ENCODE measurements at regions of chr2 and their contacts with region 1.

Region 1: GRCh38 chr2:176126929-176127773 is 2.4 kb upstream of the HOXD8 start:
- DNase-seq: peak; percentile 78
- ATAC-seq: 0 out of 2 replicates have a peak, but pooled peaks have one; percentile 14
- H3K4me3 ChIP-seq: peak overlapping the region; percentile 62
- H3K27ac ChIP-seq: no peak overlapping the region
- H3K4me1 ChIP-seq: peaks cover 10% of the 10 kb centered on the region
- H3K27me3 ChIP-seq: no peaks in the 10 kb centered on the region
- CTCF ChIP-seq: peak; percentile 93

Region 2: GRCh38 chr2:176187899-176188773 is 61.0 kb after region 1 on chr2 and contains the start of gene HOXD1:
- CTCF ChIA-PET with region 1: no interaction called
- POLR2A ChIA-PET with region 1: no interaction called
- intact Hi-C with region 1: no loop called
- DNase-seq: peak; percentile 15
- ATAC-seq: peak; percentile 71
- H3K4me3 ChIP-seq: peak within 1 kb of the TSS; percentile 60
- H3K27ac ChIP-seq: no peak within 1 kb of the TSS
- H3K4me1 ChIP-seq: no peaks in the 10 kb centered on the region
- H3K27me3 ChIP-seq: peaks cover 25% of the 10 kb centered on the region
- CTCF ChIP-seq: no peak
- total RNA-seq, gene HOXD1: not detected in 2 replicates

Region 3: DNA sequence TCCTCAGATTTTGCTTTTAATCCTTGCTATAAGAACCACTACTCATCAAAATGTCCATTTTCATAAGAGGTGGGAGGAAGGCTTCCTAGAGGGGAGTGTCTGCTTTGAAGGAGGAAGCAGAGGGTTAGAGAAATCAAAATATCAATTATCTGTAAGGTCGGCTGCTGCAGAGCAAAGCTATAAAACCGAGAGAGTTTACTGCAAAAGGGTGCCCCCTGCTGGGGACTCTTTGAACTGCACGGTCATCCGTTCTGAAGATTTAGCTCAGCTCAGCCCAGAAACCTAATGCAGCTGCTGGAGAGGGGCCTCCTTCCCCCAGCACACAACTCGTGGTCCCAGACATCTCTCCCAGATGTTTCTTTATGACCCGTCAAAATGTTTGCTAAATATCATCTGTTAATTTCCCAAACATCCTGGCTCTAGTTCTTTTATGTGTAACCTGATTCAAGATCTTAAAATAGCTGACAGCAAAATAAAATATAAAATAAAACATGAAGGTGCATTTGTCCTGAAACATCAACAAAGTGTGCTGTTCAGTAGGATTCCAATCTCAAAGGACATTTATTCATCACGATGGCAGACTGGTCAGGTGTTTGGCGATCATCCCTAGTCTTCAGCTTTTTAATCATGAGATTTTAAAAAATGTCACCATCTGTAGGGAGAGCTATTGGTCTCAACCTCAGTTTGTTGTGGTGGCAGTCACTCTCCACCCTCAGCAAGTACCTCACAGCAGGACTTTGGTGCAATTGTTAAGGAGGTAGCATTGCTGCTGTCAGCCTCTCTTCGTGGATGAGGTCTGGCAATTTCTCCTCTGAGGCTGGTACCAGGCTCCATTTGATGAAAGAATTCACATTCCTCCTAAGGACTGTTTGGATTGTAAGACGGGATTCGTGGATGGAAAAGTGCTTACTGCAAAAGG is 328.0 kb after region 1 on chr2:
- CTCF ChIA-PET with region 1: interaction called, 11 read pairs
- POLR2A ChIA-PET with region 1: no interaction called
- intact Hi-C with region 1: no loop called
- DNase-seq: peak; percentile 92
- ATAC-seq: peak; percentile 78
- H3K4me3 ChIP-seq: no peak overlapping the region
- H3K27ac ChIP-seq: no peak overlapping the region
- H3K4me1 ChIP-seq: no peaks in the 10 kb centered on the region
- H3K27me3 ChIP-seq: no peaks in the 10 kb centered on the region
- CTCF ChIP-seq: peak; percentile 92

Region 4: DNA sequence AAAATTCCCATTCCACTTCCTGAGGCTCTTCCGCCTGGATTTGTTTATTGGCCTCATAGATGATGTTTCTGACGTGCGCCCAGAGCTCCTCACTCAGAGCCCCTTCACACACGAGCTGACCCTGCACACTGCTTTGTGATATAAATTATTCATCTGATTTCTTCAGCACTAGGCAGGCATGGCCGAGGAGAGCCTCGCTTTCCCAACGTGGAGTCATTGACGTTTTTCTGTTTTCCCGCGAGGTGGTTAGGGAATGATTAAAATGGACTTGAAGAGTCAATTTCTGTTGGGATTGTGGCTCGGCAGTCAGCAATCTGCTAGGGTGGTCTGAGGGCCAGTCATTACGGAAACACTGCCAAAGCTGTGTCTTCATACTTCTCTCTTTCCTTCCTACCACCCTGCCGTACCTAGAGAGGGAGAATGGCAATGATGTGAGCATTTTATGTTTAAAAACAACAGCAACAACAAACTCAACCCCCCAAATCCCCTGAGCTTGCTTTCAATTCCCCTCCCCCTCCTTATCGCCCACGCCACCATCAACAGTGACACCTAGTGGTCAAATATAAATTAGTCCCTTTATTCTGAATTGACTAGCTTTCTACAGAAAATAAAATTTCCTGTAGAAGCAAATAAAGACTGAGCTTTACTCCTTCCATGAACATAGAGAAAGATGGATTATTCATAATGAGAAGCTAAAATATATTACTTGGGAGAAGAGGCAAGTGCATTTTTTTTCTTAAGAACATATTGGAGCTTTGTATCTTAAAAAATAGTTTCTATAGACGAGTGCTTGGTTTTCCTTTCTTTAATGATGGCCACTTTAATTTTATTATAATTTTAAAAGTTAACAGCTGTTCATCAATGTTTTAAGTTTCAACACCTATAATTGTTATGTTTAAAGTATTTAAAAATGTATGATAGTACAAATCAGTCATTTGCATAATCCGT is 427.2 kb after region 1 on chr2:
- CTCF ChIA-PET with region 1: interaction called, 18 read pairs
- POLR2A ChIA-PET with region 1: interaction called, 5 read pairs
- intact Hi-C with region 1: no loop called
- DNase-seq: peak; percentile 85
- ATAC-seq: peak; percentile 52
- H3K4me3 ChIP-seq: peak overlapping the region; percentile 72
- H3K27ac ChIP-seq: peak overlapping the region; percentile 54
- H3K4me1 ChIP-seq: peaks cover 32% of the 10 kb centered on the region
- H3K27me3 ChIP-seq: no peaks in the 10 kb centered on the region
- CTCF ChIP-seq: peak; percentile 89

Region 5: DNA sequence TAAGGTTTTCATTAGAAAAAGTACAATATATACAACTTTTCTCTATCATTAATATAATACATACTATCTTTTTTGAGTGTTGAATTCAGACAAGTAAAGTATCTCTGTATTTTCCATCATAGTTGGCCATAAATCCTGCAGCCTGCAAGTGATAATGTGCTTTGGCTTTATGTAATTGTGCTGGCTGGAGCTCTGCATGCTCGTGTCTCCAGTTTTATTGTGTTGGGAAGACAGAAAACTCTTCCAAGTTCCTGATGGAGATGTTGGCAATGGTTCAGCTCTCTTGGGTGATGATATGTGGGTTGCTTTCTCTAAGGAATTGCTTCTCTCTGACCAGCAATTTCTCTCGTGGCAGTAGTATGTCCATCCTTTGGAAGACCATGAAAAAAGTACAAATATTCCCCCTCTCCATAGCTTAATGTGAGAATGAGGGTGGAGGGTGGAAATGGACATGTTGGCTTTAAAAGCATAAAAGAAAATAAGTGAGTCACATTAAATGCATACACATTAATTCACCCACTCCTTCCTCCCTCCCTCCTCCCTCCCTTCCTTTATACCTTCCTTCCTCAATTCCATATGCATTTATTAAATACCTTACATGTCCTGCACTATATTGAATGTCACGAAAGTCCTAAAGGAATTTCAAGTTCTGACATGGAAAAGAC is 486.3 kb after region 1 on chr2:
- CTCF ChIA-PET with region 1: interaction called, 15 read pairs
- POLR2A ChIA-PET with region 1: interaction called, 4 read pairs
- intact Hi-C with region 1: no loop called
- DNase-seq: peak; percentile 69
- ATAC-seq: peak; percentile 56
- H3K4me3 ChIP-seq: peak overlapping the region; percentile 29; the same call in 1 of the 2 replicates
- H3K27ac ChIP-seq: peak overlapping the region; percentile 74
- H3K4me1 ChIP-seq: peaks cover 59% of the 10 kb centered on the region
- H3K27me3 ChIP-seq: no peaks in the 10 kb centered on the region
- CTCF ChIP-seq: no peak

Region 6: GRCh38 chr2:176653479-176654443 is 526.6 kb after region 1 on chr2:
- CTCF ChIA-PET with region 1: interaction called, 26 read pairs
- POLR2A ChIA-PET with region 1: no interaction called
- intact Hi-C with region 1: loop called (anchors 1 kb)
- DNase-seq: peak; percentile 89
- ATAC-seq: peak; percentile 89
- H3K4me3 ChIP-seq: no peak overlapping the region
- H3K27ac ChIP-seq: no peak overlapping the region
- H3K4me1 ChIP-seq: no peaks in the 10 kb centered on the region
- H3K27me3 ChIP-seq: no peaks in the 10 kb centered on the region
- CTCF ChIP-seq: peak; percentile 85

Region 7: DNA sequence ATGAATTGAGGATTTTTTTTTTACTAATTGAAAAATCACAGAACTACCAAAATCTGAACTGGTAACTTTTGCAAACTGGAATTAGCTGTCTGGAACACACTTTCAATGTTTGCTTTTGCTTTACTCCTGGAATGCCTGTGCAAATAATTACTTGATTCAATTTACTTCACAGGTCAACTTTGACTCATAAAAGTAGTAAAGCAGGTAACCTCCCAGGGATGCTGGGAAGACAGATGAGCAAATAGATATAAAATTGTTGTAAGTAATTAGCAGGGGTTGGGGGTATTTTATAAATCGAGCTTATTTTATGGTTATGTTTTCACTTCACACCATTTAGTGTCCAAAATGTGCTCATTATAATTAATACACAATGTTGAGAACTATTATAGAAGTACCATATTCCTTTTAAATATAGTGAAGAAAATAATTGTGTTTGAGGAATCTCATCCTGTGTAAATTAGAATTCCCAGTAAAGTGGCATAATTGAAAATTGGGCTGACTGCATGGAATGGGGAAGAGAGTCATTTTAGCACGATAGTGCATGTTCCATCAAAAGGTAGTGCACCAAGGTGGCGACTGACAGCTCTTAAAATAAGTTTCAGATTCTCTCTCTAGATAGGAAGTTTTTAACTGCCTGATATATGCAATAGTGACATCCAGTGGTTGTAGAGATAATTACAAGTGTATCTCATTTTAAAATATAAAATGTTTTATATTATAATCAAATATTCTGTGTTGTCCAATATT is 687.3 kb after region 1 on chr2:
- CTCF ChIA-PET with region 1: interaction called, 7 read pairs
- POLR2A ChIA-PET with region 1: no interaction called
- intact Hi-C with region 1: loop called (anchors 1 kb)
- DNase-seq: peak; percentile 70
- ATAC-seq: peak; percentile 89
- H3K4me3 ChIP-seq: peak overlapping the region; percentile 32; the same call in 1 of the 2 replicates
- H3K27ac ChIP-seq: no peak overlapping the region
- H3K4me1 ChIP-seq: peaks cover 14% of the 10 kb centered on the region
- H3K27me3 ChIP-seq: peaks cover 5% of the 10 kb centered on the region
- CTCF ChIP-seq: peak; percentile 56